Caco-2 (cell line): ENCODE measurements at regions of chr20 and their contacts with region 1.

Region 1: DNA sequence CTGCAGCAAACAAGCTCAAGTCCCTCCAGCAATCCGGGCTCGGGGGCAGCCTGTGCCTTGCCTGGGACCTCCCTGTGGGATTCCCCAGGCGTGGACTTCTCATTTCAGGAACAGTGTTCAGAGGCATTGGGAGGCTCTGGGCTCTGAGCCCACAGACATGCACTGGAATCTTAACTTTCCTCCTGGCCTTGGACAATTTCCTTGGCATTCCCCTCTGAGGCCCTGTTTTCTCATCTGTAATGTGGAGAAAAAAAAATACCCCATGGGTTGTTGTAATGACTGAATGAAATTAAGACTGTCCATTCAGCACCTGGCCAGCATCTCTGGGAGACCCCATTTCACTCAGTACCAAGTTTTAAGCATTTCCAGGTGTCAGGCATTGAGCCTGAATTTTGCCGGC is 17.6 kb downstream of the BPIFB4 start:
- DNase-seq: no peak
- H3K4me3 ChIP-seq: no peak overlapping the region
- H3K4me3 Mint-ChIP-seq: no peak overlapping the region
- H3K27ac Mint-ChIP-seq: no peak overlapping the region
- H3K4me1 ChIP-seq: no peaks in the 10 kb centered on the region
- H3K4me1 Mint-ChIP-seq: no peaks in the 10 kb centered on the region
- H3K27me3 ChIP-seq: no peaks in the 10 kb centered on the region
- H3K27me3 Mint-ChIP-seq: peaks cover 11% of the 10 kb centered on the region
- CTCF ChIP-seq: no peak

Region 2: GRCh38 chr20:32674362-32674789 is 422.6 kb before region 1 on chr20:
- CTCF ChIA-PET with region 1: no interaction called
- POLR2A ChIA-PET with region 1: no interaction called
- intact Hi-C with region 1: loop called (anchors 1 kb)
- DNase-seq: peak; percentile 79 to 91
- H3K4me3 ChIP-seq: no peak overlapping the region
- H3K4me3 Mint-ChIP-seq: no peak overlapping the region
- H3K27ac Mint-ChIP-seq: peak overlapping the region; percentile 74
- H3K4me1 ChIP-seq: peaks cover 13% of the 10 kb centered on the region; the same call in 1 of the 2 replicates
- H3K4me1 Mint-ChIP-seq: peaks cover 23% of the 10 kb centered on the region
- H3K27me3 ChIP-seq: no peaks in the 10 kb centered on the region
- H3K27me3 Mint-ChIP-seq: no peaks in the 10 kb centered on the region
- CTCF ChIP-seq: peak; percentile 97 to 99

Region 3: GRCh38 chr20:32902456-32903420 is 194.3 kb before region 1 on chr20:
- CTCF ChIA-PET with region 1: interaction called, 22 read pairs
- POLR2A ChIA-PET with region 1: no interaction called
- intact Hi-C with region 1: loop called (anchors 1 kb)
- DNase-seq: peak; percentile 76 to 80
- H3K4me3 ChIP-seq: no peak overlapping the region
- H3K4me3 Mint-ChIP-seq: no peak overlapping the region
- H3K27ac Mint-ChIP-seq: no peak overlapping the region
- H3K4me1 ChIP-seq: no peaks in the 10 kb centered on the region
- H3K4me1 Mint-ChIP-seq: no peaks in the 10 kb centered on the region
- H3K27me3 ChIP-seq: no peaks in the 10 kb centered on the region
- H3K27me3 Mint-ChIP-seq: no peaks in the 10 kb centered on the region
- CTCF ChIP-seq: peak; percentile 99 to 100

Region 4: GRCh38 chr20:32995802-32996201 is 101.2 kb before region 1 on chr20:
- CTCF ChIA-PET with region 1: interaction called, 10 read pairs
- POLR2A ChIA-PET with region 1: no interaction called
- intact Hi-C with region 1: no loop called
- DNase-seq: no peak
- H3K4me3 ChIP-seq: no peak overlapping the region
- H3K4me3 Mint-ChIP-seq: no peak overlapping the region
- H3K27ac Mint-ChIP-seq: no peak overlapping the region
- H3K4me1 ChIP-seq: no peaks in the 10 kb centered on the region
- H3K4me1 Mint-ChIP-seq: no peaks in the 10 kb centered on the region
- H3K27me3 ChIP-seq: 0 out of 2 replicates have a peak, but pooled peaks cover 1% of the 10 kb centered on the region
- H3K27me3 Mint-ChIP-seq: peaks cover 16% of the 10 kb centered on the region
- CTCF ChIP-seq: no peak

Region 5: DNA sequence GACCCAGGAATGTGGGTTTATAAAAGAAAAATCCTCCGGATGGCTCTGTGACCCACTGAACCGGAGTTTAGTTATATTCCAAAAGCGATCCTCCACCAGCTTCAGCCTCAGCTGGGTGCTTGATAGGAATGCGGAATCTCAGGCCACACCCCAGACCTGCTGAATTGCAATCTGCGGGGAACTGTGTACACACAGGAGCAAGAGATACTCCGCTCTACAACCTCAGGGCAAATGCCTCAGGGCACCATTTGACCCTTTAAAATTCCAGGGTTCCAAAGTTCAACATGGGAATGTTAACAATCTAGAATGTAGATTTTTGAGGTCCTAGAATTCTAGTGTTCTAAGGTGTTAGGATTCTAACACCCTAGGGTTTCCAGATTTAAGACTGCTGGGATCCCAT is 81.7 kb after region 1 on chr20:
- CTCF ChIA-PET with region 1: interaction called, 9 read pairs
- POLR2A ChIA-PET with region 1: no interaction called
- intact Hi-C with region 1: loop called (anchors 1 kb)
- DNase-seq: peak; percentile 96 to 100
- H3K4me3 ChIP-seq: no peak overlapping the region
- H3K4me3 Mint-ChIP-seq: peak overlapping the region; percentile 35
- H3K27ac Mint-ChIP-seq: peak overlapping the region; percentile 84
- H3K4me1 ChIP-seq: peaks cover 33% of the 10 kb centered on the region
- H3K4me1 Mint-ChIP-seq: peaks cover 33% of the 10 kb centered on the region
- H3K27me3 ChIP-seq: no peaks in the 10 kb centered on the region
- H3K27me3 Mint-ChIP-seq: no peaks in the 10 kb centered on the region
- CTCF ChIP-seq: no peak

Region 6: DNA sequence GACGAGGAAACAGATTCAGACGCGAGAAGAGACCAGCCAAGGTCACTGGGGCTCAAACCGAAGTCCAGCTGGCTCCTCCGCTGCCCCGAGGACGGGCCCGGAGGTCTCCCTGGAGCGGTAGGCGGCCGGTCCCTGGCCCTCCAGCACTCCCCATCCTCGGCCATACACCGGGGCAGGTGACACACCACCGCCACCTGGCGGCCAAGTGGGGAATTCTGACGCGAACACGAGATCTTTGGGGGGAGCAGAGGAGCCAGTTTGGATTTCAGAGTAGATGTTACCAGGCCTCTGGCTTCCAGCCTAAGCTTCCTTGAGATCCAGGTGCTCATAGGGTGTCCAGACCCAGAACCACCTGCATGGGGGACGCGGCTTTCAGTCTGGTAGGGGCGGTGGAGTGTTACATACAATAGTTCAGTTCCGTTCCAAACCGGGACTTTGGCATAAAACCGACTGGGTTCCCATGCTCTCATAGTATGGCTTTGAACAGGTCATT is 202.2 kb after region 1 on chr20:
- CTCF ChIA-PET with region 1: interaction called, 4 read pairs
- POLR2A ChIA-PET with region 1: no interaction called
- intact Hi-C with region 1: loop called (anchors 1 kb)
- DNase-seq: peak; percentile 86 to 93
- H3K4me3 ChIP-seq: no peak overlapping the region
- H3K4me3 Mint-ChIP-seq: no peak overlapping the region
- H3K27ac Mint-ChIP-seq: no peak overlapping the region
- H3K4me1 ChIP-seq: no peaks in the 10 kb centered on the region
- H3K4me1 Mint-ChIP-seq: no peaks in the 10 kb centered on the region
- H3K27me3 ChIP-seq: no peaks in the 10 kb centered on the region; the same call in 1 of the 2 replicates
- H3K27me3 Mint-ChIP-seq: peaks cover 25% of the 10 kb centered on the region
- CTCF ChIP-seq: peak; percentile 100